Activated naive CD8-positive, alpha-beta T cell treated with anti-CD3 and anti-CD28 coated beads, Interleukin-2, amount 10 ng/mL, durations not matched to agents 7 days and 5 days (primary cell): ENCODE measurements at regions of chr10 and their contacts with region 1.

Region 1: DNA sequence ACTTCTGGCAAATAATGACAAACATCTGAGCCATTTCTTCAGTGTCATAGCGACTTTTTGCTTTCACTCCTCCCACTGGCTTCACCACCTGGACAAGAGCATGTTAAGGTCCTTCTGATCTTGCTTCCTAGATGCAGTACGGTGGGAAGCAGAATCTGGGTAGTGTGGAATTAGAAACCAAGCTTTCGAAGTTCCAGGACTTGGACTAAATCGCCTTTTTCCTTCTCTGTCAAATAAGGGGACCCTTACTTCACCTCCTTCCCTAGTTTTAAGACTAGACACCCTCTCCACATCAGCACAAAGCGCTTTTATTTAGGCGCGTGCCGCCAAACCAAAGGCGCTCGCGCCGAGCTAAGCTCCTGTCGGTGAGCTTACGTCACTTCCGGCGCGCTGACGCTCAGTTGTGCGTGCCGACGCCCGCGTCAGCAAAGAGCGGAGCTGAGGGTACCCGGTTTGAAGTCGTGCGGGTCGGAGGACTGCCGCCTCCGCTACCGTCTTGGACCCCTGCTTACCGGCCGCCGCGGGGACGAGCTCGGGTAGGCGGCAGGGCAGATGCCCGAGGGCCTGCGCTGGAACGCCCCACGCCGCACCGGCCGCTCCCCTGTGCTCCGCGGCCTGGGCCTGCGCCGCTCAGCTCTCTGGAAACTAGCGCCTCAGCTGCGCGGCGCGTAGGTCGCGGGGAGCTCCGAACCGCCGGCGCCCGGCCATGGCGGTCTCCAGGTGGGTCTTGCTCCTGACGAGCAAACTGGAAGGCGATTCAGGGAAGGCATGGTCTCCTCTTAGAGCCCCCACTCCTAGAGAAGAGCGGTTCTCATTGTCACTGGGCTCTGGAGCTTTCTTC is at the start of gene BTAF1:
- DNase-seq: peak; percentile 92
- ATAC-seq: peak; percentile 96
- H3K4me3 Mint-ChIP-seq: peak within 1 kb of the TSS; percentile 99
- H3K27ac Mint-ChIP-seq: peak within 1 kb of the TSS; percentile 100
- H3K4me1 Mint-ChIP-seq: peaks cover 30% of the 10 kb centered on the region
- H3K27me3 Mint-ChIP-seq: peaks cover 6% of the 10 kb centered on the region
- total RNA-seq, gene BTAF1: 59.9 to 62.1 TPM

Region 2: DNA sequence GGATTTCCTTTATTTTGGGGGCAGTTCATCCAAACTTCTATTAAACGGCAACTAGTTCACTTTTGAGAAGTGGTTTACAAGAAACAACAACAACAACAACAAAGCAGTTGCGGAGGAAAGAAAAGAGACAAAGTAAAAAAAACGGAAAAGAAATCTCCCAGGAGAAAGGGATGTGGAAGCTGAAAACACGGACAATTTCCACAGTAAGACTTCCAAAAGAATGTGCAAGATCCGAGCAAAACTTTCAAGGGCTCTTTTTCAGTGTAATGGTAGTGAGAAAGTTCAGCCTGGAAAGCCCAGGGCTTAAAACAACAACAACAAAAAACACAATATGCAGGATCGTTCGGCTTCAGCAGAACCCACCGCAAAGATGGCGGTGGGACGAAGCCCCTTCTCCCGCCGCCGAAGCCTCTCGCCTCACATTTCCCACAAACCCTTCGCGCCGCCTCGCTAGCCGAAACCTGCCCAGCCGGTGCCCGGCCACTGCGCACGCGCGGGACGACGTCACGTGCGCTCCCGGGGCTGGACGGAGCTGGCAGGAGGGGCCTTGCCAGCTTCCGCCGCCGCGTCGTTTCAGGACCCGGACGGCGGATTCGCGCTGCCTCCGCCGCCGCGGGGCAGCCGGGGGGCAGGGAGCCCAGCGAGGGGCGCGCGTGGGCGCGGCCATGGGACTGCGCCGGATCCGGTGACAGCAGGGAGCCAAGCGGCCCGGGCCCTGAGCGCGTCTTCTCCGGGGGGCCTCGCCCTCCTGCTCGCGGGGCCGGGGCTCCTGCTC is 125.5 kb before region 1 on chr10 and contains the start of gene TNKS2:
- POLR2A ChIA-PET with region 1: interaction called, 21 read pairs
- DNase-seq: peak; percentile 95
- ATAC-seq: peak; percentile 83
- H3K4me3 Mint-ChIP-seq: peak within 1 kb of the TSS; percentile 97
- H3K27ac Mint-ChIP-seq: peak within 1 kb of the TSS; percentile 99
- H3K4me1 Mint-ChIP-seq: peaks cover 42% of the 10 kb centered on the region
- H3K27me3 Mint-ChIP-seq: no peaks in the 10 kb centered on the region
- total RNA-seq, gene TNKS2: 40.7 to 43.2 TPM

Region 3: DNA sequence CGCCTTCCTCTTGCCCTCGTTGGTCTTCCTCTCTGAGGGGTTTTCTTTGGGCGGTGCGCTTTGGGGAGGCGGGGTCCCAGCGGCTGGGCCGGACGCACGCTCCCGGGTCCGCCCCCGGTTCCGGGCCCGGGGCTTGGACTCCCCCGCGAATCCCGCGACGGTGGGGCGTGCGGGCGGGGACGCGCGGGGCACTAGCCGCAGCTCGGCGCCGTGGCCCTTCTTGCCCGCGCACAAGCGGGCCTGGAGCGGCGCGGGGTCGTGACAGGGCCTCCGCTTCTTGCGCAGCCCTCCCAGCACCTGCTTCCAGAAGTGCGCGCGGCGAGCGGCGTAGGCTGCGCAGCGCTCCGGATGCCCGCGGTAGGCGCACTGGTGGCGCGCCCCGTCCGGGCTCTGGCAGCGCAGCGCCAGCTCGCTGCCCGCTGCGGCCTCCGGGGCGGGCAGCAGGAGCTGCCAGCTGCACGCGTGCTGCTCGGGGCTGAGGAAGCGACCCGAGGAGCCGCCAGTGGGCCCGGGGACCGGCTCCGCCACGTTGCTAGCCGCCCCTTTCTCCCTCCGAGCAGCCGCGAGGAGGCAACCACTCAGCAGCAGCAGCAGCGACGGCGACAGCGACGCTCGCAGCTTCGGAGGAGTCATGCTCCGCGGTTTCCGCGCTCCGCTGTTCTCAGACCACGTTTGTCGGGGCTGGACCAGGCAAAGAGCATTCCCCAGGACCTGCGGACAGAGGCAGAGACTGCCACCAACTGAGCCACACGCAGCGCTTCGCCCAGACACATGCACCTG is 15.1 kb before region 1 on chr10:
- POLR2A ChIA-PET with region 1: interaction called, 22 read pairs
- DNase-seq: peak; percentile 85
- ATAC-seq: peak; percentile 93
- H3K4me3 Mint-ChIP-seq: peak overlapping the region; percentile 90
- H3K27ac Mint-ChIP-seq: peak overlapping the region; percentile 89
- H3K4me1 Mint-ChIP-seq: peaks cover 17% of the 10 kb centered on the region
- H3K27me3 Mint-ChIP-seq: peaks cover 13% of the 10 kb centered on the region

Region 4: DNA sequence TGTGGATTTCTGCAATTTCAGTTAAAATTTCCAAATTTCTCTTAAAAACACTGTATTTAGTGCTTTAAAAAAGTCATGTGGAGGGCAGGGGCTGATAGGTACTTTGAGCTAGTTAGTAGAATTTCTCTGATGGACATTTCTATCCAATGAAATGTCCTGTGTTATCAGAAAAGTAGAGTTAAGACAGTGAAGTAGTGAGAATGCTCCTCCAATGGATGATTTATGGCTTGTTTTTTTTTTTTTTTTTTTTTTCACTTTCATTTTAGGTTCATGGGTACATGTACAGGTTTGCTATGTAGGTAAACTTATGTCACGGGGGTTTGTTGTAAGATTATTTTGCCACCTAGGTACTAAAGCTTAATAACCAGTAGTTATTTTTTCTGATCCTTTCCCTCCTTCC is 55.0 kb after region 1 on chr10:
- POLR2A ChIA-PET with region 1: interaction called, 10 read pairs
- DNase-seq: no peak
- ATAC-seq: no peak
- H3K4me3 Mint-ChIP-seq: no peak overlapping the region
- H3K27ac Mint-ChIP-seq: no peak overlapping the region
- H3K4me1 Mint-ChIP-seq: peaks cover 21% of the 10 kb centered on the region
- H3K27me3 Mint-ChIP-seq: no peaks in the 10 kb centered on the region

Region 5: GRCh38 chr10:92290837-92291615 is 367.4 kb after region 1 on chr10 and contains the starts of genes CPEB3 and MARCHF5:
- POLR2A ChIA-PET with region 1: interaction called, 11 read pairs
- DNase-seq: peak; percentile 91
- ATAC-seq: peak; percentile 99
- H3K4me3 Mint-ChIP-seq: peak within 1 kb of the TSS; percentile 98
- H3K27ac Mint-ChIP-seq: peak within 1 kb of the TSS; percentile 84
- H3K4me1 Mint-ChIP-seq: peaks cover 21% of the 10 kb centered on the region
- H3K27me3 Mint-ChIP-seq: no peaks in the 10 kb centered on the region
- total RNA-seq, gene CPEB3: 3.4 to 3.5 TPM
- total RNA-seq, gene MARCHF5: 25.6 to 27.2 TPM